GM10248 (cell line): ENCODE measurements at regions of chr17 and their contacts with region 1.

Region 1: GRCh38 chr17:49556223-49556971 is 19.3 kb upstream of the NXPH3 start:
- DNase-seq: peak; percentile 92
- CTCF ChIP-seq: peak; percentile 95

Region 2: DNA sequence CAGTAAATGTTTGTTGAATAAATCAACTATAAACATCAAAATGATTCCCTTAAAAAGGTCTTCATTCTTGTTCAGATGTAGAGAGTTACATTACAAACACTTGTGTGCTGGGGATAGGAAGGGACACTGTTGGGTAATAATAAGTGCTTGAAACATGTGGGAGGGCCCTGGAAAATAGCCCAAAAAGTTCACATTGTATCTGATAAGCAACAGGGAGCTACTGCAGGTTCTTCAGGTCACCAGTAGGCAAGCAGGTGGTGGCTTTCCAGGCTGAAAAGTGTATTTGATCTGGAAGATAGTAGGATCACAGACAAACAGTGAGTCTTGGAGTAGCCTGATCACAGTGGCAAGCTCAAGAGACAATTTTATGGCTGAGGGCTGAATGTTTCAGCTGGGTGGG is 175.3 kb before region 1 on chr17:
- CTCF ChIA-PET with region 1: no interaction called
- POLR2A ChIA-PET with region 1: no interaction called
- DNase-seq: no peak
- CTCF ChIP-seq: no peak

Region 3: GRCh38 chr17:49401971-49402611 is 154.3 kb before region 1 on chr17:
- CTCF ChIA-PET with region 1: interaction called, 220 read pairs
- POLR2A ChIA-PET with region 1: no interaction called
- DNase-seq: no peak
- CTCF ChIP-seq: no peak

Region 4: DNA sequence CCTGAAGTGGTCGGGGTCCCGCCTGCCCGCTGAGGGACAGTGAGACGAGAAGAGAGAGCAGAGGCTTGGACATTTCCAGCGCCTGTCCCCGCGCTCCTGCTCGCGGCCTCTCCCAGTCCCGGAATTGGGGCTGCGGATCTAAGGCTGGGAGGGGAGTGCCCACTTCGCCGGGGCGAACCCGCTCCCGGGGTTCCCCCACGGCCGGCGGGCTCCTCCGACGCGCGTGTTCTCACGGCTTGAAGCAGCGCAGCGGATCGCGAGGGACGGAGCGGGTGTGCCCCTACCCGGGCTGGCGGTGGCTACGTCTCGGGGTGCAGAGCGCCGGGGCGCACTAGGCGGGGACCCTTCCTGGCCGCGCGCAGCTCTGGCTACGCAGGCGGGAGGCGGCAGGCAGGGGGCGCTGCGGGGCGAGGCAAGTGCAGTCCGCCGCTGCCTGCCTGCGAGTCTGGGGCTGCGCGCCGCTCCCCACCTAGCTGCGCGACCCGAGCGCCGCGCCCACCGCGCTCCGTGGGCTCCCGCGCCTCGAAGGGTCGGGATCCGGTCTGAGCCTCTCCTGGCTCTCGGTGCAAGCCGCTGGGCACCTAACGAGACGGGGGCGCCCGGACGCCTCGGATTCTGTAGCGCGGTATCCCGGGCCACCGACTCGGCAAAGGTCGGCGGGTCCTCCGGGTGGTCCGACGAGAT is 60.1 kb before region 1 on chr17:
- CTCF ChIA-PET with region 1: interaction called, 87 read pairs
- POLR2A ChIA-PET with region 1: no interaction called
- DNase-seq: peak; percentile 89
- CTCF ChIP-seq: peak; percentile 92

Region 5: DNA sequence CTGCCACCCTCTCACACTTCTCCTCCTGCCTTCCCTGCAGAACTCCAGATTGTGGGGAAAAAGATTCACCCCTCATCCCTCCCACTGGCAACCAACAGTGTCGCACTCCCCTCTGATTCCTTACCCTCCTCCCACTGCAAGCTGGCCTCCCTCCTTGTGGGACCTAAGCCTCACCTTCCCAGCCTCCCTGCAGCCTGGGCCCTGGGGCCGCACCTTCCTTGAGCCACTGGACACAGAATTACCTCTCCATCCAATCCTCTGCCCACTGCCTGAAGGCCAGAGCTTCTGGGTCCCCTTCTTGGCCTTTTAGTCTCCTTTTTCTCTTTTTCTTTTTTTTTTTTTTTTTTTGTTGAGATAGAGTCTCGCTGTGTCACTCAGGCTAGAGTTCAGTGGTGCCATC is 27.4 kb before region 1 on chr17:
- CTCF ChIA-PET with region 1: interaction called, 39 read pairs
- POLR2A ChIA-PET with region 1: no interaction called
- DNase-seq: no peak
- CTCF ChIP-seq: no peak

Region 6: DNA sequence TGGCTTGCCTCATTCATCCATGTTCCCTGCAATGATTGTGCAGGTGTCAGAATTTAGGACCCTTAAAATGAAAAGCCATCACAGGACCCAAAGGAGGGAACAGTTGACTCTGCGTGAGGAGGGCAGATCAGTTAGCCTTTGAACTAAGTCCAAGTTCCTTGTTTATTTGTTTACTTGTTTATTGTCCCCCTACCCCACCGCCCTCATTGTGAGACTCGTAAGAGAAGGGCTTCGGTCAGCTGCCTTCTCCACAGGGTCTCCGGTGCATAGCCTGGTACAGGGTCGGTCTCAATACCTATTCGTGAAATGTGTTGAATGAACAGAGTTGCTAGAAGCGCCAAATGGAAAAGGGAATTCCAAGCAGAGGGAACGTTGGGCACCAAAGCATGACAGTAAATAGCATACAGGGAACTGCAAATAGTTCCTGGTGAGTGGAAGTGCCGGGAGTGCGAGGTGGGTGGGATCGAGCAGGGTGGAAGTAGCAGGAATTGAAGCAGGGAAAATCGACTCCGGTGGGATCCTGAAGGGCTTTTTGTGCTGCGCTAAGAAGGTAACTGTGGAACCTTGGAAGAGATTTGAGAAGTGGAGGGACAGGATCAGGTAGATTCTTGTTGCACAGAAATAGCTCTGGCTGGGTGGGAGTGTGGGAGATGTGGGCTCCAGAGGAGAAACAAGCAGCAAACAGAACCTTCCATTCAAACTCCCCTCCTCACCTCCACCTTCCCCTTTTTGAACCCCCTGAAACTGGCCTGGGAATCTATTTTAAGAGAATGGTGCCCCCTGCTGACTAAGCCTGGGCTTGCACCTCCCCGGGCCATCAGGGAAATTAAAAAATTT is 138.7 kb after region 1 on chr17:
- CTCF ChIA-PET with region 1: interaction called, 56 read pairs
- POLR2A ChIA-PET with region 1: interaction called, 3 read pairs
- DNase-seq: peak; percentile 68
- CTCF ChIP-seq: peak; percentile 78

Region 7: DNA sequence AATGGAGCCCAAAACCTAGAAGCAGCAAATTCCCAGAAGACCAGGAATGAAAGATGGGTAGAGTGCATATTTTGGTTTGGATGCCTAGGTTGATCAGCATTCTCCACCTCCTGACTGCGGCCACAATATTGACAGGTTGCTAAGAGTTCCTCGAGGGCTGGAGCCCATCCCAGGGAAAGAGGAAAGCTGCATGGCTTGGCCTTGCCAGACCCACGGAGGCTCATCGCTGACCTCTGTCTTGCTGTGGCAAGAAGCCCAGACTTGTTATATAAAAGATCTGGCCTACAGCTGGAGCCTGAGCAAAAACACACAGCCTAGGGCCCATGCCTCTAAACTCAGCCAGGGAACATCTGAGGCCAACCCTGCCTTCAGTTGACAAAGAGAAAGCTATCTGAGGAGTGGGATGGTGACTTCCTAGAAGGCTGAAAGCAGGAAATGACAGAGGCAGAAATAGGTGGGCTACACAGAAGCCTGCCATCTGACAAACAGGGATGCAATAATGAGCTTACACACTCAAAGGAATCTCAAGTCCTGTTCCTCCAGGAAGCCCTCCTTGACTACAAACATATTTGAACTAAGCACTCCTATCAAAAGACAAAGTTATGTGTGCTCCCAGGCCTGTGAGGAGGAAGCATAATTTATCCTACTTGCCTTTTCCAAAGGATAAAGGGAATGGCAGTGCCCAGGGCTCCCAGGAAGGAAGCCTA is 173.8 kb after region 1 on chr17:
- CTCF ChIA-PET with region 1: interaction called, 10 read pairs
- POLR2A ChIA-PET with region 1: no interaction called
- DNase-seq: no peak
- CTCF ChIP-seq: no peak